GM12878 (cell line): ENCODE measurements at regions of chr14 and their contacts with region 1.

Region 1: GRCh38 chr14:89178802-89179535 is 238.1 kb downstream of the FOXN3 start:
- DNase-seq: no peak
- ATAC-seq: no peak
- H3K4me3 ChIP-seq: no peak overlapping the region
- H3K27ac ChIP-seq: no peak overlapping the region
- H3K4me1 ChIP-seq: peaks cover 8% of the 10 kb centered on the region
- H3K27me3 ChIP-seq: no peaks in the 10 kb centered on the region
- CTCF ChIP-seq: no peak
- EP300 ChIP-seq: no peak
- POLR2A ChIP-seq: no peak
- RAD21 ChIP-seq: no peak

Region 2: GRCh38 chr14:88868558-88869159 is 310.3 kb before region 1 on chr14:
- CTCF ChIA-PET with region 1: no interaction called
- POLR2A ChIA-PET with region 1: no interaction called
- RAD21 ChIA-PET with region 1: no interaction called
- SMC1A ChIA-PET with region 1: no interaction called
- in situ Hi-C with region 1: no loop called
- intact Hi-C with region 1: no loop called
- DNase-seq: no peak
- ATAC-seq: peak; percentile 74
- H3K4me3 ChIP-seq: no peak overlapping the region
- H3K27ac ChIP-seq: no peak overlapping the region
- H3K4me1 ChIP-seq: no peaks in the 10 kb centered on the region
- H3K27me3 ChIP-seq: no peaks in the 10 kb centered on the region
- CTCF ChIP-seq: peak; percentile 27 to 47 (median 35); a peak in 4 of 6 replicates
- EP300 ChIP-seq: no peak
- POLR2A ChIP-seq: no peak
- RAD21 ChIP-seq: peak; percentile 75

Region 3: GRCh38 chr14:88962356-88962755 is 216.6 kb before region 1 on chr14:
- CTCF ChIA-PET with region 1: no interaction called
- POLR2A ChIA-PET with region 1: no interaction called
- RAD21 ChIA-PET with region 1: no interaction called
- SMC1A ChIA-PET with region 1: no interaction called
- in situ Hi-C with region 1: no loop called
- intact Hi-C with region 1: no loop called
- DNase-seq: no peak
- ATAC-seq: no peak
- H3K4me3 ChIP-seq: no peak overlapping the region
- H3K27ac ChIP-seq: no peak overlapping the region
- H3K4me1 ChIP-seq: no peaks in the 10 kb centered on the region
- H3K27me3 ChIP-seq: no peaks in the 10 kb centered on the region
- CTCF ChIP-seq: no peak
- EP300 ChIP-seq: no peak
- POLR2A ChIP-seq: no peak
- RAD21 ChIP-seq: no peak

Region 4: GRCh38 chr14:89207925-89208328 is 29.0 kb after region 1 on chr14:
- CTCF ChIA-PET with region 1: interaction called, 16 read pairs
- POLR2A ChIA-PET with region 1: no interaction called
- RAD21 ChIA-PET with region 1: no interaction called
- SMC1A ChIA-PET with region 1: no interaction called
- in situ Hi-C with region 1: no loop called
- intact Hi-C with region 1: no loop called
- DNase-seq: peak; percentile 17
- ATAC-seq: peak; percentile 85
- H3K4me3 ChIP-seq: no peak overlapping the region
- H3K27ac ChIP-seq: no peak overlapping the region
- H3K4me1 ChIP-seq: no peaks in the 10 kb centered on the region
- H3K27me3 ChIP-seq: no peaks in the 10 kb centered on the region
- CTCF ChIP-seq: no peak; a peak in 1 of 6 replicates
- EP300 ChIP-seq: no peak
- POLR2A ChIP-seq: no peak
- RAD21 ChIP-seq: no peak

Region 5: DNA sequence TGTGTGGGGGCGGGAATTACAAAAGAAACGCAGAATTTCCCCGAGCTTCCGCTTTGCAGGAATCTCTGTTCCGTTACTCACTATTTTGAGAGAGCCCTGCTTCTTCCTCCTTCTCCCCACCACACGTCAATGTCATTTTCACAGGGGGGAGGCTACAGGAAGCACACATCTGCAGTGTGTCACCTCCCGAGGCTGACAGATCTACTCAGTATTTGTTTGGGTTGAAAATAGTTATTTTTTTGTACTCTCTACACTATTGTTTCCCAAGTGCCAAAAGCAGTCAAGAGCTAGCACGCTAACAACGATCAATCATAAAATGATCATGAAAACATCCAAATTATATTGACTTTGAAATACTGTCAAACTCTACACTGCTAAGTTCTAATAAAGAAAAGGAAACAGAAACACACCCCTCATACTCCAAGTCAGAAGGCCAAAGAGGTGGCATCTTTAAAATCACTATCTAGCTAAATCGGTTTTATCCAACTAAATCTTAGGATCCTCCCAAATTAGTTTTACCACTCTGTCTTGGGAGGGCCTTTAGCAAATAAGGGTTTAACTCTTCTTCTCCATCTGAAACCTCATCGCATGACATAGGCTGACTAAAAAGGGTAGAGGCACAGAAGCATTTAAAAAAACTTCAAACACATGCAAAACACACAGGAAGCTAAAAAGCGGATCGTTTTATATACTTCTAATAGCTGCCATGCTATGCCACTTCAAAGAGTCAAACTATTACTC is 186.3 kb after region 1 on chr14:
- CTCF ChIA-PET with region 1: interaction called, 12 read pairs
- POLR2A ChIA-PET with region 1: no interaction called
- RAD21 ChIA-PET with region 1: interaction called, 3 read pairs
- SMC1A ChIA-PET with region 1: interaction called, 4 read pairs
- in situ Hi-C with region 1: no loop called
- intact Hi-C with region 1: no loop called
- DNase-seq: peak; percentile 81
- ATAC-seq: peak; percentile 96
- H3K4me3 ChIP-seq: peak overlapping the region; percentile 59
- H3K27ac ChIP-seq: peak overlapping the region; percentile 97
- H3K4me1 ChIP-seq: peaks cover 31% of the 10 kb centered on the region
- H3K27me3 ChIP-seq: no peaks in the 10 kb centered on the region
- CTCF ChIP-seq: no peak
- EP300 ChIP-seq: peak; percentile 82 to 90
- POLR2A ChIP-seq: peak; percentile 51; the same call in 1 of the 2 replicates
- RAD21 ChIP-seq: no peak; the same call in 1 of the 2 replicates

Region 6: DNA sequence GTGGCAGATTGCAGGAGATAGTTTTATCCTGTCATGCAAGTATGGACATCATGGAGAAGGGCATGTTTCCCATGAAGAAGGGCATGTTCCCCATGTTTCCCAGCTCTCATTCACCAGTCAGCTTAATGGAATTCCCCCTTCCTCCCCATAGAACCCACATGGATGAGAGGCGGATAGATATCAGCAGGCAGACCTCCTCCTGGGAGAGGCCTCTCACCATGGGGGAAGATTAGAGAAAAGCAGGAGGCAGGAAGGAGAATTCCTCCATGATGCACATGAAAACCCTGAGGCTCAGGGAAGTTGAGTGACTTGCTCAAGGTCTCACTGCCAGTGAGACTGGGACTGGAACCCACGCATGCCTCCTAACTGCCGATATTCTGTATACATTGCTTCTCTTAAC is 330.9 kb after region 1 on chr14:
- CTCF ChIA-PET with region 1: no interaction called
- POLR2A ChIA-PET with region 1: no interaction called
- RAD21 ChIA-PET with region 1: no interaction called
- SMC1A ChIA-PET with region 1: no interaction called
- in situ Hi-C with region 1: no loop called
- intact Hi-C with region 1: loop called (anchors 10 kb)
- DNase-seq: no peak
- ATAC-seq: no peak
- H3K4me3 ChIP-seq: no peak overlapping the region
- H3K27ac ChIP-seq: peak overlapping the region; percentile 69
- H3K4me1 ChIP-seq: peaks cover 35% of the 10 kb centered on the region
- H3K27me3 ChIP-seq: no peaks in the 10 kb centered on the region
- CTCF ChIP-seq: no peak
- EP300 ChIP-seq: no peak
- POLR2A ChIP-seq: no peak
- RAD21 ChIP-seq: no peak

Region 7: DNA sequence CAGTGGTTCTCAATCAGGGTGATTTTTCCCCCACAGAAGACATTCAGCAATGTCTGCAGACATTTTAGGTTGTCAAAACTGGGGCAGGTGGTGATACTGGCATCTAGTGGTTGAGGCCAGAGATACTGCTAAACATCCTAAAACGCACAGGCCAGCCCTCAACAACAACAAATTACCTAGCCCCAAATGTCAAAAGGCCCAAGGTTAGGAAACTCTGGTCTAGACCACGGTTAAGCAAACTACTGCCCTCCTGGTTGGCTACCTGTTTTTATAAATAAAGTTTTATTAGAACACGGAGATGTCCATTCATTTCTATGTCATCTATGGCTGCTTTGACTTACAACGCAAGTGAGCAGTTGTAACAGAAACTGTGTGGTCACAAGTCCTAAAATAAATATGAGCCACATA is 588.9 kb after region 1 on chr14:
- CTCF ChIA-PET with region 1: interaction called, 7 read pairs
- POLR2A ChIA-PET with region 1: no interaction called
- RAD21 ChIA-PET with region 1: interaction called, 6 read pairs
- SMC1A ChIA-PET with region 1: interaction called, 7 read pairs
- in situ Hi-C with region 1: no loop called
- intact Hi-C with region 1: loop called (anchors 5 kb)
- DNase-seq: peak; percentile 65
- ATAC-seq: peak; percentile 94
- H3K4me3 ChIP-seq: no peak overlapping the region
- H3K27ac ChIP-seq: peak overlapping the region; percentile 56
- H3K4me1 ChIP-seq: peaks cover 22% of the 10 kb centered on the region
- H3K27me3 ChIP-seq: no peaks in the 10 kb centered on the region
- CTCF ChIP-seq: peak; percentile 75 to 87 (median 81)
- EP300 ChIP-seq: 0 out of 4 replicates have a peak, but pooled peaks of 1 of the 2 experiments have one; percentile 29
- POLR2A ChIP-seq: no peak
- RAD21 ChIP-seq: peak; percentile 95